IMR-90 (cell line): ENCODE measurements at regions of chr12 and their contacts with region 1.

Region 1: GRCh38 chr12:54005853-54006686 is 2.7 kb upstream of the HOXC8 start:
- DNase-seq: peak; percentile 62
- ATAC-seq: peak; percentile 93
- H3K4me3 ChIP-seq: no peak overlapping the region
- H3K27ac ChIP-seq: no peak overlapping the region
- H3K4me1 ChIP-seq: no peaks in the 10 kb centered on the region
- H3K27me3 ChIP-seq: peaks cover 90% of the 10 kb centered on the region
- CTCF ChIP-seq: peak; percentile 95
- POLR2A ChIP-seq: no peak
- RAD21 ChIP-seq: peak; percentile 93

Region 2: GRCh38 chr12:53701518-53702260 is 304.4 kb before region 1 on chr12:
- CTCF ChIA-PET with region 1: no interaction called
- POLR2A ChIA-PET with region 1: no interaction called
- dilution Hi-C with region 1: no loop called
- in situ Hi-C with region 1: no loop called
- intact Hi-C with region 1: loop called (anchors 10 kb)
- DNase-seq: peak; percentile 66
- ATAC-seq: peak; percentile 98
- H3K4me3 ChIP-seq: no peak overlapping the region
- H3K27ac ChIP-seq: no peak overlapping the region
- H3K4me1 ChIP-seq: no peaks in the 10 kb centered on the region
- H3K27me3 ChIP-seq: peaks cover 67% of the 10 kb centered on the region
- CTCF ChIP-seq: peak; percentile 98
- POLR2A ChIP-seq: no peak
- RAD21 ChIP-seq: peak; percentile 97

Region 3: GRCh38 chr12:53924521-53925405 is 81.3 kb before region 1 on chr12:
- CTCF ChIA-PET with region 1: no interaction called
- POLR2A ChIA-PET with region 1: no interaction called
- dilution Hi-C with region 1: no loop called
- in situ Hi-C with region 1: no loop called
- intact Hi-C with region 1: no loop called
- DNase-seq: no peak
- ATAC-seq: no peak
- H3K4me3 ChIP-seq: no peak overlapping the region
- H3K27ac ChIP-seq: no peak overlapping the region
- H3K4me1 ChIP-seq: no peaks in the 10 kb centered on the region
- H3K27me3 ChIP-seq: peaks cover 59% of the 10 kb centered on the region
- CTCF ChIP-seq: no peak
- POLR2A ChIP-seq: no peak
- RAD21 ChIP-seq: no peak

Region 4: DNA sequence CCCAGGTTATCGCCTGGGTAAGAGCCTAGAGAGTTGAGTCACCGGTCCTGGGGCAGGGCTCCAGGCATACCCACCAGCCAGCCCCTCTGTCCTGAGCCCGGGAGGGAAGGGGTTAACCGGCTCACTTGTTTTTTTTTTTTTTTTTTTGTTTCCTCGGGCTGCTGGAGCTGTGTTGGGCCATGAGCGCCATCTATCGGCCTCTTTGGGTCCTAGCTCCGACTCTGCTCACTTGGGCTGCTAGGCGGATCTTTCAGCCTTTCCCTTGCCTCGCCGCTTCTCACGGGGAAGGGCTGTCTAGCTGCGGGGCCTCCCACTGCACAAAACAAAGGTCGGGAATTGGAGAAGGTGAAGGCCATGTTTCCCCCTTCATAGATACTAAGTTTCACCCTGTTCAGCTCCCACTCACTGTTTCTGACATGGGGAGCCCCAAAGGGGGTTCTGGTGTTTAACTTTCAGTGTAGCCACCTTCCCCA is 185.5 kb after region 1 on chr12:
- CTCF ChIA-PET with region 1: interaction called, 8 read pairs
- POLR2A ChIA-PET with region 1: no interaction called
- dilution Hi-C with region 1: no loop called
- in situ Hi-C with region 1: loop called (anchors 5 kb)
- intact Hi-C with region 1: loop called (anchors 1 kb)
- DNase-seq: peak; percentile 79
- ATAC-seq: peak; percentile 74
- H3K4me3 ChIP-seq: no peak overlapping the region
- H3K27ac ChIP-seq: no peak overlapping the region
- H3K4me1 ChIP-seq: peaks cover 2% of the 10 kb centered on the region
- H3K27me3 ChIP-seq: peaks cover 21% of the 10 kb centered on the region
- CTCF ChIP-seq: peak; percentile 89
- POLR2A ChIP-seq: no peak
- RAD21 ChIP-seq: peak; percentile 81

Region 5: GRCh38 chr12:54201001-54201794 is 195.1 kb after region 1 on chr12:
- CTCF ChIA-PET with region 1: interaction called, 19 read pairs
- POLR2A ChIA-PET with region 1: no interaction called
- dilution Hi-C with region 1: no loop called
- in situ Hi-C with region 1: no loop called
- intact Hi-C with region 1: loop called (anchors 1 kb)
- DNase-seq: peak; percentile 65
- ATAC-seq: peak; percentile 99
- H3K4me3 ChIP-seq: no peak overlapping the region
- H3K27ac ChIP-seq: no peak overlapping the region
- H3K4me1 ChIP-seq: no peaks in the 10 kb centered on the region; the same call in 1 of the 2 replicates
- H3K27me3 ChIP-seq: peaks cover 33% of the 10 kb centered on the region
- CTCF ChIP-seq: peak; percentile 99
- POLR2A ChIP-seq: no peak
- RAD21 ChIP-seq: peak; percentile 78

Region 6: DNA sequence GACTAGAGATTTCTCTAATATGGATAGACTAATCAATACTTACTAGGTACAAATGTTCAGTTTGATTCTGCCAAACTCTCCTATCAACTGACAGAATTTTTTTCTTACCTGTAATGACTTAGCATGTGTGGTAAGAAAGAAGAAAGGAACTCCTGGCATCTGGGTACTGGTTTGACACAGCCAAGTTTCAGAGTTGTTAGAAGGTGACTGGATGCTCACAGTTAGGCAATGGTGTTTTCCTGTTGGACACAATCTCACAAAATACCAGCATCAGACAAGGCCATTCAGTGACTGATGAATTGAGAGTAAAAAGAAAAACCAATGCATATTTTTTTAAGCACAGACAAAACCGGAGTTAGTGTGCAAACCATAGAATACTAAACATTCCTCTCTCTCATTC is 852.5 kb after region 1 on chr12:
- CTCF ChIA-PET with region 1: no interaction called
- POLR2A ChIA-PET with region 1: no interaction called
- dilution Hi-C with region 1: no loop called
- in situ Hi-C with region 1: no loop called
- intact Hi-C with region 1: no loop called
- DNase-seq: no peak
- ATAC-seq: no peak
- H3K4me3 ChIP-seq: no peak overlapping the region
- H3K27ac ChIP-seq: no peak overlapping the region
- H3K4me1 ChIP-seq: no peaks in the 10 kb centered on the region
- H3K27me3 ChIP-seq: no peaks in the 10 kb centered on the region
- CTCF ChIP-seq: no peak
- POLR2A ChIP-seq: no peak
- RAD21 ChIP-seq: no peak